ENCODE measurements at regions of chr4 and their contacts with region 1.

Region 1: GRCh38 chr4:183407128-183407585 is 37.3 kb upstream of the CDKN2AIP start:
- DNase-seq: peak; percentile 89 to 92
- ATAC-seq: peak; percentile 96 to 97 (median 97)
- H3K4me3 ChIP-seq: peak overlapping the region; percentile 63
- H3K4me3 Mint-ChIP-seq: peak overlapping the region; percentile 81
- H3K27ac ChIP-seq: peak overlapping the region; percentile 80
- H3K27ac Mint-ChIP-seq: peak overlapping the region; percentile 75 to 86
- H3K4me1 ChIP-seq: peaks cover 3% of the 10 kb centered on the region
- H3K4me1 Mint-ChIP-seq: peaks cover 14 to 16% of the 10 kb centered on the region in 2 donors
- H3K27me3 ChIP-seq: no peaks in the 10 kb centered on the region
- H3K27me3 Mint-ChIP-seq: peaks cover 5 to 7% of the 10 kb centered on the region in 2 donors
- CTCF ChIP-seq: peak; percentile 81

Region 2: DNA sequence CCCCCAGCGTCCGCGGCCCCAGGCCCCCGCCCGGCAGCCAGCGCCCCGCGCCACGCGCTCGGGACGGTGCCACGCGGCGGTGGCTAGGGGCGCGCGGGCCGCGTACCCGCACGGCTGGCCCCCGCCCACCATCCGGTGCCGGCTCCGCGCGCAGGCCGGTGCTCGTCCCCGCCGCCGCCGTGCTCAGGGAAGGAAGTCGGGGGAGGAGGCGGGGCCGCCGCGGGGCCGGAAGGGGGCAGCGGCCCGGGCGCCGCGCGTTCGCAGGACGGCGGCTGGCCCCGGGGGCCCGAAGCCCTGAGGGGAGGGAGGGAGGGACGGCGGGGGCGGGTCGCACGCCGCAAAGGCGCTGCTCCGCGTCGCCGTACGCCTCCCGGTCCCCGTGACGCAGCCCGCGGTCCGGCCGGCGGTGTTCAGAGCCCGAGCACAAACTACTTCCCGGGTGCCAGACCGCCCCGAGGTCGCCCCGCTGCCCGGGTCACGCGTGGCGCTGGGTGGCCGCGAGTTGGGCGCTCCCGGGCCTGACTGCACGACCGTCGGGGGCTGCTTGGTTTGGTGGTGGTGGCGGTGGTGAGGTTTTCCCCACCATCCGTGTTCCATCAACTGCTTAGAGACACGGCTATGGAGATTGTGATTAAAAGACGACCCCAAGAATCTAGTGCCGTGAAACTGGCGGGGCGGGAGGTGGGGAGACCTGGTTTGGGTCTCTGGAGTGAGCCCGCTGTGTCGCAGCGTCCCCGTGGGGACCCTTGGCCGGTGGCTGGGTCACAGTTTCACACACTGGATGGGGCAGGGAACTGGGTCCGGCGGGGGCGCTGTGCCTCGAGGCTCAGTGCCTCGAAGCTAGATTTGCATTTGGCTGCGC is 489.7 kb before region 1 on chr4 and contains the start of gene DCTD:
- intact Hi-C with region 1: loop called (anchors 2 kb)
- DNase-seq: peak; percentile 77 to 87
- ATAC-seq: peak; percentile 71 to 86 (median 80)
- H3K4me3 ChIP-seq: peak within 1 kb of the TSS; percentile 86
- H3K4me3 Mint-ChIP-seq: peak within 1 kb of the TSS; percentile 87
- H3K27ac ChIP-seq: peak within 1 kb of the TSS; percentile 100
- H3K27ac Mint-ChIP-seq: peak within 1 kb of the TSS; percentile 90 to 91
- H3K4me1 ChIP-seq: peaks cover 28% of the 10 kb centered on the region
- H3K4me1 Mint-ChIP-seq: peaks cover 44 to 47% of the 10 kb centered on the region in 2 donors
- H3K27me3 ChIP-seq: no peaks in the 10 kb centered on the region
- H3K27me3 Mint-ChIP-seq: no peaks in the 10 kb centered on the region
- CTCF ChIP-seq: no peak
- total RNA-seq, gene DCTD: 57.2 to 68.2 (median 68.1) TPM

Region 3: GRCh38 chr4:183074296-183074990 is 332.7 kb before region 1 on chr4:
- intact Hi-C with region 1: loop called (anchors 5 kb)
- DNase-seq: no peak
- ATAC-seq: no peak
- H3K4me3 ChIP-seq: no peak overlapping the region
- H3K4me3 Mint-ChIP-seq: no peak overlapping the region
- H3K27ac ChIP-seq: no peak overlapping the region
- H3K27ac Mint-ChIP-seq: no peak overlapping the region
- H3K4me1 ChIP-seq: no peaks in the 10 kb centered on the region
- H3K4me1 Mint-ChIP-seq: no peaks in the 10 kb centered on the region
- H3K27me3 ChIP-seq: no peaks in the 10 kb centered on the region
- H3K27me3 Mint-ChIP-seq: peaks cover 5 to 10% of the 10 kb centered on the region in 2 donors
- CTCF ChIP-seq: no peak

Region 4: GRCh38 chr4:183444214-183445066 is 37.3 kb after region 1 on chr4 and contains the start of gene CDKN2AIP:
- intact Hi-C with region 1: loop called (anchors 5 kb)
- DNase-seq: peak; percentile 93 to 96
- ATAC-seq: peak; percentile 85 to 94 (median 87)
- H3K4me3 ChIP-seq: peak within 1 kb of the TSS; percentile 60
- H3K4me3 Mint-ChIP-seq: peak within 1 kb of the TSS; percentile 95
- H3K27ac ChIP-seq: peak within 1 kb of the TSS; percentile 87
- H3K27ac Mint-ChIP-seq: peak within 1 kb of the TSS; percentile 95 to 96
- H3K4me1 ChIP-seq: peaks cover 16% of the 10 kb centered on the region
- H3K4me1 Mint-ChIP-seq: peaks cover 43 to 48% of the 10 kb centered on the region in 2 donors
- H3K27me3 ChIP-seq: no peaks in the 10 kb centered on the region
- H3K27me3 Mint-ChIP-seq: no peaks in the 10 kb centered on the region
- CTCF ChIP-seq: no peak
- total RNA-seq, gene CDKN2AIP: 24.2 to 27.3 (median 25.7) TPM

Region 5: DNA sequence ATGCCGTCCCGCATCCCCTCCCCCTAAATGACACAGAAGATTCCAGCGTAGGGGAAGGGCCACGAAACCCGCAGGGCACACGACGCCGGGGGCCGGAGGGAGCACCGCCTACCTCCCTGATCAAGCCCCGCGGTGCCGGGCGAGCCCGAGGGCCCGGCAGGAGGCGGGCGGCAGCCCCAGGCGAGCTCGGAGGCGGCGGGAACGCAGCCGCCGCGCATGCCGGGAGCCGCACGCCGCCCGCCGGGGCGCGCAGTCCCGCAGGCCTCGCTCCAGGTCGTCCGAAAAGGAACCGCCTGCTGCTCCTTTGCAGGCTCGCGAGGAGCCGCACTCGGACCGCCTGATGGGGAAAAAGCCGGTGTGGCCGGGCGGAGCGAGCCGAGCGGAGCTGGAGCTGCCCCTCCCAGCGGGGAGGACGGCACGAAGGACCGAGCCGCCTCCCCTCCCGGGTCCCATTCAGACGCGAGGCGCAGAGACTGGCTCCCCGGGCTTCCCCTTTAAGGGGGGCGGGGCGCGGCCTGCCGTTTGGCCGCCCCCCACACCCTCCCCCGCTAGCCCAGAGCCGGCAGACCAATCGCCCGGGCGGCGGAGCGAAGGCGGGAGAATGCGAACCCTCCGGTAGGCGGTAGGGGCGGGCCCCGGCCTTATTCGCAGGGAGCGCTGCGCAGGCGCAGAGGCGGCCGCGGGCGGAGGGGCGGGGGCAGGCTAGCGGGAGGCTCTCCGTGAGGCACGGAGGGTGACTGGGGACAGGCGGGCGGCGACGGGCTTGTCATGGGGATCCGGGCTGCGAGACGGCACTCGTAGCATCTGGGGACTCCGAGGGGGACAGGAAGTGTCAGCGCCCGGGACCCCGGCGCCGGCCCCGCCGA is 97.1 kb after region 1 on chr4:
- intact Hi-C with region 1: loop called (anchors 1 kb)
- DNase-seq: peak; percentile 98 to 100
- ATAC-seq: peak; percentile 79 to 95 (median 84)
- H3K4me3 ChIP-seq: peak overlapping the region; percentile 85
- H3K4me3 Mint-ChIP-seq: peak overlapping the region; percentile 93
- H3K27ac ChIP-seq: peak overlapping the region; percentile 90
- H3K27ac Mint-ChIP-seq: peak overlapping the region; percentile 88 to 92
- H3K4me1 ChIP-seq: peaks cover 3% of the 10 kb centered on the region
- H3K4me1 Mint-ChIP-seq: peaks cover 13 to 20% of the 10 kb centered on the region in 2 donors
- H3K27me3 ChIP-seq: no peaks in the 10 kb centered on the region
- H3K27me3 Mint-ChIP-seq: no peaks in the 10 kb centered on the region
- CTCF ChIP-seq: no peak

Measured in natural killer cell (primary cell).